Activated B cell treated with CpG ODN at 0.5 μM for 24 hours (primary cell): ENCODE measurements at regions of chr5 and their contacts with region 1.

Region 1: GRCh38 chr5:72955768-72956323 is at the start of gene FCHO2:
- DNase-seq: peak; percentile 96
- ATAC-seq: peak; percentile 96
- H3K4me3 Mint-ChIP-seq: peak within 1 kb of the TSS; percentile 92
- H3K27ac Mint-ChIP-seq: peak within 1 kb of the TSS; percentile 76
- H3K4me1 Mint-ChIP-seq: peaks cover 14% of the 10 kb centered on the region
- H3K27me3 Mint-ChIP-seq: peaks cover 22% of the 10 kb centered on the region
- CTCF ChIP-seq: no peak
- total RNA-seq, gene FCHO2: 3.2 and 5.3 TPM in 2 replicates

Region 2: GRCh38 chr5:72319976-72320752 is 635.7 kb before region 1 on chr5 and contains the starts of genes MRPS27 and PTCD2:
- CTCF ChIA-PET with region 1: no interaction called
- POLR2A ChIA-PET with region 1: interaction called, 14 read pairs
- intact Hi-C with region 1: loop called (anchors 1 kb)
- DNase-seq: peak; percentile 79
- ATAC-seq: peak; percentile 99
- H3K4me3 Mint-ChIP-seq: peak within 1 kb of the TSS; percentile 98
- H3K27ac Mint-ChIP-seq: peak within 1 kb of the TSS; percentile 93
- H3K4me1 Mint-ChIP-seq: peaks cover 25% of the 10 kb centered on the region
- H3K27me3 Mint-ChIP-seq: no peaks in the 10 kb centered on the region
- CTCF ChIP-seq: no peak
- total RNA-seq, gene MRPS27: 69.2 and 71.6 TPM in 2 replicates
- total RNA-seq, gene PTCD2: 6.2 and 8.9 TPM in 2 replicates

Region 3: DNA sequence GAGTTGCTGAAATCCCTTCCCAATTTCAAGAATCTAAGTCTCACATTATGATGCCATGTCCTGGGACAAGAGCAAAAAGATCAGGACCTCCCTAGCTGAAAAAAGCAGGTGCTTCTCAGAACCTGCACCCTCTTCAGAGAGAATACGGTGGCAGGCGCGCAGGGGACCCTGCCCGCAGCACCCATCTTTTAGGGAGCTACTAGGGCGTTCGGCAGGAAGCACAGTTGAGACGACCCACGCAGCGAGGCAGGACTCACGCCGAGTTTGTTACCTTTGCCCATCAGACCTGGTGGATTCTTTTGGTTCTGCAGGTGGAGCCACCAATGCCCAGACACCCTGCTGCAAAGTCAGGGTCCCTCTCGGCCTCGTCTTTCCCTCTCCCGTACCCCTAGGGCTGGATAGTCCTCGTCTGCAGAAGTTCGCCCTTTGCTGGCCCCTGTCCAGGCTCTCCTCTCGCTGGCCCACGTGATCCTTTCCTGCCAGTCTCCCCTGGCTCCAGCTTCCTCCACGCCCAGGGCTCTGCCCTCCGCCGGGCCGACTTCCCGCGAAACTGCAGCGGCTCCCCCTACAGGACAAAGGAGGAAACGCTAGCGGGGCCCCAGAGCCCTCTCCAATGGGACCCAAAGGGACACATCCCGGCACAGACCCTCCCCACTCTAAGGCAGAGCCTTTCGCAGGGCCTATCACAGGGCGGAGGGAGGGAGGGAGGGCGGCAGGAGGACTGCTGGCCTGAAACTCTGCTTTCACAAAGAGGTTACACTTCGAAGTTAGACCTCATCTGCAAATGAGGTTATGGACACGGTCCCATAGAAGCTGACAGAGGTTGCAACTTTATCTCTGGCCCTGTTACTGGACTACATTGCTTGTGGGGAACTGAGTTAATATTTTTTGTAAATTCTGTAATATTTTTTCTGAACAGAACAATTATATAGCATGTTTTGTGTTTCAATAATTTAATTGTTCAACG is 246.0 kb after region 1 on chr5:
- CTCF ChIA-PET with region 1: no interaction called
- POLR2A ChIA-PET with region 1: no interaction called
- intact Hi-C with region 1: loop called (anchors 5 kb)
- DNase-seq: peak; percentile 46
- ATAC-seq: peak; percentile 56
- H3K4me3 Mint-ChIP-seq: peak overlapping the region; percentile 21
- H3K27ac Mint-ChIP-seq: no peak overlapping the region
- H3K4me1 Mint-ChIP-seq: peaks cover 3% of the 10 kb centered on the region
- H3K27me3 Mint-ChIP-seq: peaks cover 32% of the 10 kb centered on the region
- CTCF ChIP-seq: no peak

Region 4: GRCh38 chr5:73498057-73499008 is 542.5 kb after region 1 on chr5 and contains the start of gene BTF3:
- CTCF ChIA-PET with region 1: no interaction called
- POLR2A ChIA-PET with region 1: interaction called, 3 read pairs
- intact Hi-C with region 1: loop called (anchors 1 kb)
- DNase-seq: peak; percentile 88
- ATAC-seq: peak; percentile 96
- H3K4me3 Mint-ChIP-seq: peak within 1 kb of the TSS; percentile 97
- H3K27ac Mint-ChIP-seq: peak within 1 kb of the TSS; percentile 97
- H3K4me1 Mint-ChIP-seq: peaks cover 33% of the 10 kb centered on the region
- H3K27me3 Mint-ChIP-seq: peaks cover 4% of the 10 kb centered on the region
- CTCF ChIP-seq: no peak
- total RNA-seq, gene BTF3: 753 and 798 TPM in 2 replicates